Activated CD4-positive, alpha-beta memory T cell treated with anti-CD3 and anti-CD28 coated beads for 36 hours (primary cell): ENCODE measurements at regions of chr12 and their contacts with region 1.

Region 1: GRCh38 chr12:9049520-9050133 is 60.3 kb downstream of the KLRG1 start:
- DNase-seq: no peak
- H3K4me3 Mint-ChIP-seq: no peak overlapping the region
- H3K27ac Mint-ChIP-seq: no peak overlapping the region
- H3K4me1 Mint-ChIP-seq: peaks cover 24% of the 10 kb centered on the region
- H3K27me3 Mint-ChIP-seq: no peaks in the 10 kb centered on the region

Region 2: GRCh38 chr12:8662593-8662992 is 387.0 kb before region 1 on chr12 and contains the start of gene MFAP5:
- CTCF ChIA-PET with region 1: interaction called, 36 read pairs
- POLR2A ChIA-PET with region 1: no interaction called
- intact Hi-C with region 1: loop called (anchors 2 kb)
- DNase-seq: no peak
- H3K4me3 Mint-ChIP-seq: no peak within 1 kb of the TSS
- H3K27ac Mint-ChIP-seq: no peak within 1 kb of the TSS
- H3K4me1 Mint-ChIP-seq: no peaks in the 10 kb centered on the region
- H3K27me3 Mint-ChIP-seq: peaks cover 5% of the 10 kb centered on the region
- total RNA-seq, gene MFAP5: not detected

Region 3: GRCh38 chr12:8687846-8688601 is 361.6 kb before region 1 on chr12:
- CTCF ChIA-PET with region 1: interaction called, 68 read pairs
- POLR2A ChIA-PET with region 1: no interaction called
- intact Hi-C with region 1: no loop called
- DNase-seq: no peak
- H3K4me3 Mint-ChIP-seq: no peak overlapping the region
- H3K27ac Mint-ChIP-seq: no peak overlapping the region
- H3K4me1 Mint-ChIP-seq: no peaks in the 10 kb centered on the region
- H3K27me3 Mint-ChIP-seq: no peaks in the 10 kb centered on the region

Region 4: GRCh38 chr12:8860165-8860961 is 189.3 kb before region 1 on chr12:
- CTCF ChIA-PET with region 1: interaction called, 13 read pairs
- POLR2A ChIA-PET with region 1: no interaction called
- intact Hi-C with region 1: no loop called
- DNase-seq: peak; percentile 46
- H3K4me3 Mint-ChIP-seq: no peak overlapping the region
- H3K27ac Mint-ChIP-seq: no peak overlapping the region
- H3K4me1 Mint-ChIP-seq: no peaks in the 10 kb centered on the region
- H3K27me3 Mint-ChIP-seq: no peaks in the 10 kb centered on the region

Region 5: GRCh38 chr12:8914716-8915526 is 134.7 kb before region 1 on chr12:
- CTCF ChIA-PET with region 1: interaction called, 15 read pairs
- POLR2A ChIA-PET with region 1: no interaction called
- intact Hi-C with region 1: no loop called
- DNase-seq: peak; percentile 74
- H3K4me3 Mint-ChIP-seq: no peak overlapping the region
- H3K27ac Mint-ChIP-seq: no peak overlapping the region
- H3K4me1 Mint-ChIP-seq: peaks cover 7% of the 10 kb centered on the region
- H3K27me3 Mint-ChIP-seq: no peaks in the 10 kb centered on the region

Region 6: DNA sequence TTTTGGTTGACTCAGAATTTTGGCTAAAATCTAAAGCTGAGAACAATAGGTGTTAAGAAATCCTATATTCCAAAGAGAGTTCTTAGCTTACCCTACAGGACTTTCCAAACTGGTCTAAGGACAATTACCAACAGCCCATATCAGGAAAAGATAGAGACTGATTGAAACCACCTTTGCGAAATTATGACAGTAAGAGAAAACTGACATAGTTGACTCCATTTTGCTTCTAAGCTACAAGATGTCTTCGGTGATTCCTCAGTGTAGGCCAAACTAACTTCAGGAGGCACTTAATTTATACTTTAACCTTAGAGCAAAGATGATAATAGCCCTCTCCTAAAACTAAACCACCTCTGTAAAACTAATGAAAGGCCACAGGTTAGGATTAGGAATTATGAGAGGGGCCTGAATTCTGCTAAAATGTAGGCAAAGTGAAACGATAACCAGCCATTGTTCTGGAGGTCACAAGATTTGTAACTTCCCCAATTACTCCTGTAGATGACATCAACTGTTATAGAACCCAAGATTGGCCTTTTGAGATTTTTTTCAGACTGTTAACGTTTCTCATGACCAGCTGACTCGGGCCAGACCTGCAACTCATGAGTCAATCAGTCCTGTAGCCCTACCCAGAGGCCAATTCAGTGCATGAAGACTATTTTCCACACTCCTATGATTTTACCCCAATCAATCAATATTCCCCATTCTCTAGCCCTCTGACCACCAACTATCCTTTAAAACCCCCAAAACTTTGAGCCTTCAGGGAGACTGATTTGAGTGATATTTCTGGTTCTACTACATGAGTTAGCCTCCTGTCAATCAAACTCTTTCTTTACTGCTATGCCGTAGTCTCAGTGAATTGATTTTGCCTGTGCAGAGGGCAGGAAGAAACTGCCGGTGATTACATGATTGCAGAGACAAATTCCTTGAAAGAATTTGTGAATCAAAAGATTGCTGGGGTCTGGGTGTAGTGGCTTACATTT is 17.1 kb before region 1 on chr12:
- CTCF ChIA-PET with region 1: interaction called, 53 read pairs
- POLR2A ChIA-PET with region 1: no interaction called
- intact Hi-C with region 1: no loop called
- DNase-seq: peak; percentile 27
- H3K4me3 Mint-ChIP-seq: no peak overlapping the region
- H3K27ac Mint-ChIP-seq: peak overlapping the region; percentile 31
- H3K4me1 Mint-ChIP-seq: peaks cover 53% of the 10 kb centered on the region
- H3K27me3 Mint-ChIP-seq: peaks cover 2% of the 10 kb centered on the region

Region 7: DNA sequence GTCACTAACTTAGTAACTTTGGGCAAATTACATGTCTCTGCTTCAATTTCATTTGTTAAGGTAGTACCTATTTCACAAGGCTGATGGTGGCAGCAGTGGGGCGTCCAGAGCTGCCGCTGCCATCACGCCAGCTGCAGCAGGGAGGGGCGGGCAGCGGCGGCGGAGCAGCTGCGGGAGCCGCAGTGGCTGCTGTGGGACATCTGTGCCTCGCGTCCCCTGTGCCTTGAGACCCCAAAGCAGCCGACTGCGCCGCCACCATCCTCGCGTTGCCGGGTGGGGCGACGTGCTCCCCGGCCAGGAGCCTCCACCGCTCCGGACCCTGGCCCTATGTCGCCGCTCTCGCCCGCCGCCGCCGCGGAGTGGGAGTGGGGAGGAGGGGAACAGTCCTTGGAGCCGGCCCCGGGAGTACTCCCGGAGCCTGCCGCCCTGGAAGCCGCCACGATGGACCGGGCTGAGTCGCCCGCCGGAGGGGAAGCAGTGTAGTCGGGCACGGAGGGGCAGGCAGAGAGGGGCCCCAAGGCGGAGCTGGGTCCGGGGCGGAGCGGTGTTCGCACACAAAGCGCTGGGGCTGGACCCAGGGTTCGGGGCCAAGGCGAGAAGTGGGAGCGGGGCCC is 14.7 kb after region 1 on chr12:
- CTCF ChIA-PET with region 1: interaction called, 17 read pairs
- POLR2A ChIA-PET with region 1: no interaction called
- intact Hi-C with region 1: no loop called
- DNase-seq: peak; percentile 73
- H3K4me3 Mint-ChIP-seq: peak overlapping the region; percentile 54
- H3K27ac Mint-ChIP-seq: no peak overlapping the region
- H3K4me1 Mint-ChIP-seq: peaks cover 7% of the 10 kb centered on the region
- H3K27me3 Mint-ChIP-seq: no peaks in the 10 kb centered on the region

Region 8: GRCh38 chr12:9086087-9086486 is 36.5 kb after region 1 on chr12:
- CTCF ChIA-PET with region 1: no interaction called
- POLR2A ChIA-PET with region 1: no interaction called
- intact Hi-C with region 1: no loop called
- DNase-seq: no peak
- H3K4me3 Mint-ChIP-seq: no peak overlapping the region
- H3K27ac Mint-ChIP-seq: no peak overlapping the region
- H3K4me1 Mint-ChIP-seq: no peaks in the 10 kb centered on the region
- H3K27me3 Mint-ChIP-seq: no peaks in the 10 kb centered on the region

Region 9: GRCh38 chr12:9449181-9449580 is 399.6 kb after region 1 on chr12:
- CTCF ChIA-PET with region 1: no interaction called
- POLR2A ChIA-PET with region 1: no interaction called
- intact Hi-C with region 1: no loop called
- DNase-seq: no peak
- H3K4me3 Mint-ChIP-seq: peak overlapping the region; percentile 97
- H3K27ac Mint-ChIP-seq: no peak overlapping the region
- H3K4me1 Mint-ChIP-seq: peaks cover 13% of the 10 kb centered on the region
- H3K27me3 Mint-ChIP-seq: no peaks in the 10 kb centered on the region